ENCODE measurements at regions of chr20 and their contacts with region 1.

Region 1: DNA sequence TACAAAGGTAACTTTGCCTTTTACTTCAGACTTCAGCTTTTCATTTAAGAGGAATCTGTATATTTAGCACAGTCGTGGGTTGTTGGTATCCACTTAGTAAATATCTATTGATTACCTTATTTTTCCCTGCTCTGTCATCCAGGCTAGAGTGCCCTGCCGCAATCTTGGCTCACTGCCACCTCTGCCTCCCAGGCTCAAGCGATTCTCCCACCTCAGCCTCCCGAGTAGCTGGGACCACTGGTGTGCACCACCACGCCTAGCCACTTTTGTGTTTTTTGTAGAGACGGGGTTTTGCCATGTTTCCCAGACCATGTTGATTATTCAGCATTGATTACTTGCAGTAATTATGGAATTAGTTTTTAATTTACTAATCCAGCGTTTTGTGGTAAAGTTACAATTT is 41.3 kb downstream of the MACROD2 start:
- DNase-seq: no peak
- H3K4me3 Mint-ChIP-seq: no peak overlapping the region
- H3K27ac Mint-ChIP-seq: no peak overlapping the region
- H3K4me1 Mint-ChIP-seq: no peaks in the 10 kb centered on the region
- H3K27me3 Mint-ChIP-seq: no peaks in the 10 kb centered on the region
- CTCF ChIP-seq: no peak

Region 2: GRCh38 chr20:13995081-13995694 is 41.4 kb before region 1 on chr20 and contains the start of gene MACROD2:
- CTCF ChIA-PET with region 1: no interaction called
- intact Hi-C with region 1: loop called (anchors 5 kb)
- DNase-seq: peak; percentile 97
- H3K4me3 Mint-ChIP-seq: peak within 1 kb of the TSS; percentile 92
- H3K27ac Mint-ChIP-seq: peak within 1 kb of the TSS; percentile 52
- H3K4me1 Mint-ChIP-seq: peaks cover 8% of the 10 kb centered on the region
- H3K27me3 Mint-ChIP-seq: no peaks in the 10 kb centered on the region
- CTCF ChIP-seq: no peak
- total RNA-seq, gene MACROD2: 28.1 and 29.4 TPM in 2 replicates